Heart right ventricle (tissue), 16 donors: ENCODE measurements at regions of chr5 and their contacts with region 1.

Region 1: DNA sequence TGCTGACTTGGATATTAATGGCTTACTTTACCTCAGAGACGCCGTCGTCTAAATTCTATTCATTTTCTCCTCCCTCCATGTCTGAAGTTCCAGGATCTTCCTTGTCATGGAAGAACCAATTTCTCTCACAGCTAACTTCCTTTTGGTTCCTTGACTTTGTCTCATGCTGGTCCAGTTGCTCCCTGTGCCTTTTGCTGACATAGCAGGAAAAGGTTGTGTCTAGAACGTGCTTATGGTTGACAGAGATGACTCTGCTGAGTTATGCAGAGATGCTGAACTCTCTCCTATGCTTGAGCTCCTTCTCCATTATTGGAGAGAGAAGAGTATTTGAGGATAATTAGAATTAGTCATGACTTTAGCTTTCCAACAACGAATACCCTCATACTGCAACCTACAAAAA is 1338.9 kb downstream of the MAT2B start:
- DNase-seq: no peak
- ATAC-seq: no peak
- H3K4me3 ChIP-seq: no peak overlapping the region
- H3K27ac ChIP-seq: no peak overlapping the region
- H3K4me1 ChIP-seq: no peaks in the 10 kb centered on the region
- H3K27me3 ChIP-seq: no peaks in the 10 kb centered on the region
- CTCF ChIP-seq: no peak

Region 2: DNA sequence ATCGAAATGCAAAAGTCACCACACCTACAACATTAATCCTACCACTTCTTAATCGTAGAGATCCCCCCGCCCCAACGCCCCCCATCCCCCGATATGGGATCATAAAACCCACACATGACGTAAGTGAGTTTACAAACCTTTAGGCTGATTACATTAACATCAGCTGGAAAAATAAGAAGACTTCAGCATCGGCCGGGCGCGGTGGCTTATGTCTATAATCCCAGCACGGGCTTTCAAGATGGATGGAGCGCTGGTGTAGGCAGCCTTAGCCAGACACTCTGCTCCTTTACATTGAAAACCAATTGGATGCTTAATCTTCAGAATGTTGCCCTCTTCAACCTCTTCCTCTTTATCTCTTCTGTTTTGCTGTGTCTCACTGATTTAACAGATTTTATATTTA is 37.1 kb after region 1 on chr5:
- intact Hi-C with region 1: loop called in 1 of 10 experiments (anchors 1 kb)
- DNase-seq: no peak
- ATAC-seq: no peak
- H3K4me3 ChIP-seq: no peak overlapping the region
- H3K27ac ChIP-seq: no peak overlapping the region
- H3K4me1 ChIP-seq: no peaks in the 10 kb centered on the region
- H3K27me3 ChIP-seq: no peaks in the 10 kb centered on the region
- CTCF ChIP-seq: no peak

Region 3: GRCh38 chr5:164893071-164893470 is 48.7 kb after region 1 on chr5:
- intact Hi-C with region 1: no loop called
- DNase-seq: no peak
- ATAC-seq: no peak
- H3K4me3 ChIP-seq: no peak overlapping the region
- H3K27ac ChIP-seq: no peak overlapping the region
- H3K4me1 ChIP-seq: no peaks in the 10 kb centered on the region
- H3K27me3 ChIP-seq: no peaks in the 10 kb centered on the region
- CTCF ChIP-seq: no peak